ENCODE measurements at regions of chr1 and their contacts with region 1.

Region 1: DNA sequence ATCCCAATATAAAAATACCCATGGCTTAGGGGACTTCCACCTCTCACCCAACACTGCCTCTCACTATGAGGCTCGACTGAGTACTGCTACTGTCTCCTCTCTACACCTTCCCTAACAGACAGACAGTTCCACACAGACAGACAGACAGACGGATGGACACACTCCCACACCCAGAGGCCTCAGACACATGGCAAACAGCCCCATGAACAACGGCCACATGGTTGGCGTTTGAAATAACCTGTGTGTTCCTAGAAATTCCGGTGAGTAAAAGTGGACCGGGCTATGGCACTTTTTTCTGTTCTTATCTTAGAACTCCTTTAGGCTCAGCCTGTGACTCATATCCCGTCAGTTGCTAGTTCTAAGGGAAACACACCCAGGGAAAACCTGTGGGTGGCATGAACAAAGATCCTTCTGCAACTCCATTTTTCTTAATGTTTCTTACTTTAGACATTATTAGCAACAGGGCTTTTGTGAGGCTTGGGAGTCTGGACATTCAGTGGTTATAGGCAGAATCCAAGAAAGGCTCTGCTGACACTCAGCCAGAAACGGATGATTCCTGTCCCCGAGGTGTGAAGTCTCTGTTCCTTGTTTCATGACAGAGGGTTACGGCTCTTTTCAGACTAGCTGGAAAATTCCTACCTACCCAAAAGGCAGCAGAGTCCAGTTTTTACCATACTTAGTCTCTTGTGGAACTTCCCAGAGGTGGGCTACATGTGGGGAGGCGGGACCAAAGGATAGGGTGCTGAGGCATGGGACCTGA is 90.5 kb upstream of the TLR5 start:
- DNase-seq: peak; percentile 95
- H3K4me3 Mint-ChIP-seq: peak overlapping the region; percentile 26
- H3K27ac Mint-ChIP-seq: peak overlapping the region; percentile 33
- H3K4me1 Mint-ChIP-seq: peaks cover 48% of the 10 kb centered on the region
- H3K27me3 Mint-ChIP-seq: no peaks in the 10 kb centered on the region
- CTCF ChIP-seq: no peak

Region 2: DNA sequence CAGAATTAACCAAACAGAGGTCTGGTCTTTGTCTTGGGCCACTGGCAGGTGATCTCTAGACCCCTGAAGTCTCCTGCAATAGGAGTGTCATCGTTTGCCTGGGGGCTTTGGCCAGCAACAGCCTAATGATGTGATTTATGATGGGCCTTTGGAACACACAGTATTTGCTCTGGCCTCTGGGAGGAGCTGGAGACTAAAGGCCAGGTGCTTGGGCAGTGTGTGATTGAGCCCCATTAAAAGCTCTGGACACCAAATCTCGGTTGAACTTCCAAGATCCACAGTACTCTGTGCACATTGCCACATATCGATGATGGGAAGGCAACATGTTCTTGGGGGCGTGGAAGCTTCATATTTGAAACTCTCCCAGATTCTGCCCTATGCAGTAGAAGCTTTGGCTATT is 58.6 kb before region 1 on chr1:
- CTCF ChIA-PET with region 1: no interaction called
- POLR2A ChIA-PET with region 1: no interaction called
- intact Hi-C with region 1: no loop called
- DNase-seq: peak; percentile 80
- H3K4me3 Mint-ChIP-seq: no peak overlapping the region
- H3K27ac Mint-ChIP-seq: no peak overlapping the region
- H3K4me1 Mint-ChIP-seq: peaks cover 10% of the 10 kb centered on the region
- H3K27me3 Mint-ChIP-seq: no peaks in the 10 kb centered on the region
- CTCF ChIP-seq: peak; percentile 71

Region 3: DNA sequence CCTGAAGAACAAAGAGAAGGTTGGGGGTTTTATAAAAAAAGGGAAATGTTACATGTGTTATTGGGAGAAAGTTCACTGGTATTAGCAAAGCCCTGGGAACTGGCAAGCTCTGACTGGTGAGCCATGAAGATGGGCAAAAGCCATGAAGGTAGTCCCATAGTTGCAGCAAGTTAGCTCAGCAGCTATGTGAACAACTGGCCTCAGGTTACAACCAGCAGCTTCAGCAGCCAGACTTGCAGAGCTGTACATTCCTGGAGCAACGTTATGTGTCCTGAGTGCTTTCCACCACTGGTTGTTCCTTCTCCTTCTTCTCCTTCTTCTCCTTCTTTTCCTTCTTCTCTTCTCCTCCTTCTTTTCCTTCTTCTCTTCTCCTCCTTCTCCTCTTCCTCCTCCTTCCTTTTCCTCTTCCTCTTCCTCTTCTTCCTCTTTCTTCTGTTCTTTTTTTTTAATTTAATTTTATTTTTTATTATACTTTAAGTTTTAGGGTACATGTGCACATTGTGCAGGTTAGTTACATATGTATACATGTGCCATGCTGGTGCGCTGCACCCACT is 34.4 kb before region 1 on chr1:
- CTCF ChIA-PET with region 1: interaction called, 5 read pairs
- POLR2A ChIA-PET with region 1: interaction called, 3 read pairs
- intact Hi-C with region 1: loop called (anchors 2 kb)
- DNase-seq: peak; percentile 72
- H3K4me3 Mint-ChIP-seq: no peak overlapping the region
- H3K27ac Mint-ChIP-seq: no peak overlapping the region
- H3K4me1 Mint-ChIP-seq: peaks cover 40% of the 10 kb centered on the region
- H3K27me3 Mint-ChIP-seq: no peaks in the 10 kb centered on the region
- CTCF ChIP-seq: no peak

Region 4: GRCh38 chr1:223486365-223486764 is 252.8 kb after region 1 on chr1:
- CTCF ChIA-PET with region 1: no interaction called
- POLR2A ChIA-PET with region 1: no interaction called
- intact Hi-C with region 1: no loop called
- DNase-seq: peak; percentile 38
- H3K4me3 Mint-ChIP-seq: no peak overlapping the region
- H3K27ac Mint-ChIP-seq: no peak overlapping the region
- H3K4me1 Mint-ChIP-seq: peaks cover 8% of the 10 kb centered on the region
- H3K27me3 Mint-ChIP-seq: peaks cover 20% of the 10 kb centered on the region
- CTCF ChIP-seq: no peak